CD14-positive monocyte (primary cell): ENCODE measurements at regions of chr14 and their contacts with region 1.

Region 1: DNA sequence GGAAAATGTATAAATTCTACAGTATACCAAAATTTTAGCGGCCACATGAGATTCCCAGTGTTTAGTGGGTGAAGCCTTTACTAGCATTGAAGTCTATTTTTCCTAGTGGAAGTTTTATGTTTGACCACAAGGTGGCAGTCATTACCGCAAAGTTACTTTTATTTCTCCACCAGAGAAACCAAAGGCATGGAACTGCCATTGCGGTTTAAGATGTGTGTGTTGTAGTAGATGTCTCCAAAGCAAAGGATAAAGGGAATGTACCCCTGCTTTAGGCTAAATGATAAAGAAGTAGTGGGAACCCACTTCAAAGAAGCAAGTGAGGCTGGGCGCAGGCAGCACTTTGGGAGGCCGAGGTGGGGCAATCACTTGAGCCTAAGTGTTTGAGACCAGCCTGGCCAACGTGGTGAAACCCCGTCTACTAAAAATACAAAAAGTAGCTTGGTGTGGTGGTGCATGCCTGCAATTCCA is 140.5 kb downstream of the PRKCH start:
- DNase-seq: peak; percentile 55 to 79 (median 66)
- H3K4me3 ChIP-seq: no peak overlapping the region
- H3K4me3 Mint-ChIP-seq: no peak overlapping the region
- H3K27ac ChIP-seq: no peak overlapping the region
- H3K27ac Mint-ChIP-seq: peak overlapping the region in 3 of 7 donors; percentile 16 to 40 (median 34)
- H3K4me1 ChIP-seq: peaks cover under 1% of the 10 kb centered on the region in 2 donors
- H3K4me1 Mint-ChIP-seq: peaks cover 9% of the 10 kb centered on the region
- H3K27me3 ChIP-seq: no peaks in the 10 kb centered on the region
- H3K27me3 Mint-ChIP-seq: peaks cover 0 to 2% (median 0%) of the 10 kb centered on the region in 3 donors
- CTCF ChIP-seq: peak; percentile 84

Region 2: DNA sequence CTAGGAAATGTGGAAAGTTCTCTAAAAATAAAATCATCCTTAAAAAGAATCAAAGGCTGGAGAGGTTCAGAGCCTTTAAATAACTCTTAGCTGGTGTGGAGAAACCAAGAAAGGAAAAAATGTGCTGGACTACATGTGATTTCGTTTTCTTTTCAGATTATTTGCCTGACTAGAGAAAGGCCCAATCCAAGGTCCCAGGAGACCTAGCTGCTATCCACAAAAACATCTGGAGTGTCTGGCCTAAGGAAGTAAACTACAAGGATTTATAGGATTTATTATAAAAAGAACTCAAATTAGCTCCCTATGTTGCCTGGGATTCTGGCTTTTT is 179.9 kb before region 1 on chr14:
- intact Hi-C with region 1: no loop called
- DNase-seq: no peak
- H3K4me3 ChIP-seq: no peak overlapping the region
- H3K4me3 Mint-ChIP-seq: peak overlapping the region in 1 of 2 donors; percentile 59
- H3K27ac ChIP-seq: no peak overlapping the region
- H3K27ac Mint-ChIP-seq: no peak overlapping the region
- H3K4me1 ChIP-seq: peaks cover 14 to 15% of the 10 kb centered on the region in 2 donors
- H3K4me1 Mint-ChIP-seq: peaks cover 21% of the 10 kb centered on the region
- H3K27me3 ChIP-seq: peaks cover 53 to 84% of the 10 kb centered on the region in 2 donors
- H3K27me3 Mint-ChIP-seq: peaks cover 50 to 71% (median 54%) of the 10 kb centered on the region in 3 donors
- CTCF ChIP-seq: no peak

Region 3: GRCh38 chr14:61710853-61711817 is 249.3 kb after region 1 on chr14:
- intact Hi-C with region 1: loop called in 1 of 2 experiments (anchors 5 kb)
- DNase-seq: no peak
- H3K4me3 ChIP-seq: no peak overlapping the region
- H3K4me3 Mint-ChIP-seq: peak overlapping the region in 1 of 2 donors; percentile 45
- H3K27ac ChIP-seq: no peak overlapping the region
- H3K27ac Mint-ChIP-seq: peak overlapping the region in 2 of 7 donors; percentile 15 to 47
- H3K4me1 ChIP-seq: no peaks in the 10 kb centered on the region
- H3K4me1 Mint-ChIP-seq: peaks cover 53% of the 10 kb centered on the region
- H3K27me3 ChIP-seq: no peaks in the 10 kb centered on the region
- H3K27me3 Mint-ChIP-seq: no peaks in the 10 kb centered on the region
- CTCF ChIP-seq: no peak